ENCODE measurements at regions of chr5 and their contacts with region 1.

Region 1: DNA sequence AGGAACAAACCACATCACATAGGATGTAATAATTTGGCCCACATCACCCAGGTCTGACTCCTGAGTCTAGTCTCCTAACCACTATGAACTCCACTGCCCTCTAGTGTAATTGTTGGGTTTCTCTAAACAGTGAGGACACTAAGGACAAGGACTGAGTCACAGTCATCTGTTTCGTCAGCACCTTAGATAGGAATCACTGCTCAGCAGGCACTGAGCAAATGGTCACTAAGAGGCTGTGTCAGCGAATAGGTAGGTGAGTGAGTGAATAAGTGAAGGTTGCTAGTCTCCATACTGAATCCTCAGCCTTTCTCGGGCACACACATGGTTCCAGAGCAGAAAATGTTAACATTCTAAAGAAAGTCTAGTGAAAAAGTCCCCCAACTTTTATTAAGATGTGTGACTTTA is 278.6 kb downstream of the SPOCK1 start:
- DNase-seq: peak; percentile 96
- ATAC-seq: peak; percentile 90
- H3K4me3 ChIP-seq: no peak overlapping the region
- H3K27ac ChIP-seq: no peak overlapping the region
- H3K4me1 ChIP-seq: no peaks in the 10 kb centered on the region
- H3K27me3 ChIP-seq: no peaks in the 10 kb centered on the region
- CTCF ChIP-seq: peak; percentile 67

Region 2: DNA sequence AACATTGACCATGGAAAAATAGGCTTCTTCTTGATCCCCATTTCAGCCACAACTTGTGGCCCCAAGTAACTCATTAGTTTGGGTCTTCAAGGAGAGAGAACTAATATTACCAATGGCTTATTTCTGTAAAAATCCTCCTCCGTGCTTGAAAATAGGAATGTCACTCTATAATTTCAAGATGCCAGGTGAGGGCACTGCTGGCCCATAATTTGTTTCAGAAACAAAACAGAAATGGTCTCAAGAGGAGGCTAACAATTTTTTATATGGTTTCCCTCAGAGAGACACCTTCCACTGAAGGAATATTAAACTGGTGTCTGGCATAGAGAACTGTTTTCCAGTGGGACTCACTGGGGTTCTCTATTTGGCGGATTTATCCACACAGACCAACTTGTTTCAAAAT is 418.1 kb before region 1 on chr5:
- CTCF ChIA-PET with region 1: no interaction called
- POLR2A ChIA-PET with region 1: no interaction called
- in situ Hi-C with region 1: no loop called
- intact Hi-C with region 1: loop called (anchors 10 kb)
- DNase-seq: peak; percentile 48
- ATAC-seq: no peak
- H3K4me3 ChIP-seq: no peak overlapping the region
- H3K27ac ChIP-seq: no peak overlapping the region
- H3K4me1 ChIP-seq: no peaks in the 10 kb centered on the region
- H3K27me3 ChIP-seq: no peaks in the 10 kb centered on the region; the same call in 1 of the 2 replicates
- CTCF ChIP-seq: peak; percentile 34; the same call in 1 of the 2 replicates